Tibial artery (tissue), 4 donors: ENCODE measurements at regions of chr14 and their contacts with region 1.

Region 1: DNA sequence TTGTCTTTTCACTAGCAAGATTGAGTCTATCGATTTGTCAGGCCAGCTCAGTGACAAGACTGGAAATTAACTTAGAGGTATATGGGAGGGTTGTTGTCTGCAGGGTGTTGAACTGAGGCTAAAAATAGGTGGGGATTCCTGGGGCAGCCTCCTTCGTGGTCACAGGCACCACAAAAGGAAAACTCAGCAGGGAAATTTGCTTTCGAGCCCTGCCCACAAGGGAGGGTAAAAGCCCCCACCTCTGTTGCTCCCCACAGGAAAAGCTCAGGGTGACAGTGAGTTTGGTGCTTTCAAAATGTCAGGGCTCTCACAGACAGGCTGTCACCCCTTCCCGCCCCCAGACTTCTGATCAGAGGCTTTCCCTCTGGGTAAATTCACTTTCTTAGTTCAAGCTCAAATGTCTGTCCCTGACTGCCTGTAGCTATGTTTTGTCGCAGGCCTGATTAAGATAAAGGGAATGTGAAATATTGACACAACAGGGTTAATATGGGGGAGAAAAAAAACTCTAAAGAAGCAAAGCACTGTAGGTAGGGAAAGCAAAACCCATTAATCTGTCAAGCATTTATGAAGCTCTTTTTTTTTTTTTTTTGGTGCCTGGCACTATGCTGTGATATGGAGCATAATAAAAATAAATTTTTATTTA is 11.7 kb upstream of the NFKBIA start:
- DNase-seq: no peak
- H3K4me3 ChIP-seq: no peak overlapping the region
- H3K27ac ChIP-seq: peak overlapping the region in 1 of 2 donors; percentile 47
- H3K4me1 ChIP-seq: peaks cover 0 to 28% (median 12%) of the 10 kb centered on the region in 4 donors
- H3K27me3 ChIP-seq: no peaks in the 10 kb centered on the region
- CTCF ChIP-seq: no peak

Region 2: DNA sequence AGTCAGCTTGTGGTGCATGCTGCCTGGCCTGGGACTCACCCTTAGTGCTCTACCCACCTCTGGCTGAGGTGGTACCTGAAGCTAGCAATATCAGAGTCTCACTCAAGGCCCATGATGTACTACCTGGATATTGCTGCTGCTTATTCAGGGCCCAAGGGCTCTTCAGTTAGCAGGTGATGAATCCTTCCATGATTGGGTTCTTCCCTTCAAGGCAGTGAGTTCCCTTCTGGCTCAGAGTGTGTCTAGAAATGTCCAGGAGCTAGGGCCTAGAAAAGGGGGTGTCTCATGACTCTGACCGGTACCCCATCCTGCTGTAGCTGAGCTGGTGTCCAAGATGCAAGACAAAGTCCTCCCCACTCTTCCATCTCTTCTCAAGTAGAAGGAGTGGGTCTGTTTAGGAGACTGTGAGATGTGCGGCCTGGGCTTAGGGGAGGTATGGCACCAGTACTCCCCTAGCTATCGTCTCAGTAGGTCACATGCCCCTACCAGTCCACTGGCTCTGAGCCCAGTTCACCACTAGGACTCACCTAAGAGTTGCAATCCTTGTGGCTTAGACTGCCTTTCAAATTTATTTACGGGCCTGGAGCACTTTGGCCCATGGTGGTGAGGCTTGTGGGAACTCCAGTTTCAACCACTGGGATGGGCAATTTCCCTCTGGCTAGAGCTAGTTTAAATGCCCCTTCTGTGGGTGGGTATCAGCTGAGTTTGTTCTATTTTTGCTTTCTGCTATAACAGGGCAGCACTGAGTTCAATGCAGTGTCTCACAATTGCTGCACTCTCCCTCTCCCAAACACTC is 281.7 kb before region 1 on chr14:
- intact Hi-C with region 1: loop called (anchors 5 kb)
- DNase-seq: no peak
- H3K4me3 ChIP-seq: no peak overlapping the region
- H3K27ac ChIP-seq: no peak overlapping the region
- H3K4me1 ChIP-seq: no peaks in the 10 kb centered on the region
- H3K27me3 ChIP-seq: no peaks in the 10 kb centered on the region
- CTCF ChIP-seq: no peak

Region 3: DNA sequence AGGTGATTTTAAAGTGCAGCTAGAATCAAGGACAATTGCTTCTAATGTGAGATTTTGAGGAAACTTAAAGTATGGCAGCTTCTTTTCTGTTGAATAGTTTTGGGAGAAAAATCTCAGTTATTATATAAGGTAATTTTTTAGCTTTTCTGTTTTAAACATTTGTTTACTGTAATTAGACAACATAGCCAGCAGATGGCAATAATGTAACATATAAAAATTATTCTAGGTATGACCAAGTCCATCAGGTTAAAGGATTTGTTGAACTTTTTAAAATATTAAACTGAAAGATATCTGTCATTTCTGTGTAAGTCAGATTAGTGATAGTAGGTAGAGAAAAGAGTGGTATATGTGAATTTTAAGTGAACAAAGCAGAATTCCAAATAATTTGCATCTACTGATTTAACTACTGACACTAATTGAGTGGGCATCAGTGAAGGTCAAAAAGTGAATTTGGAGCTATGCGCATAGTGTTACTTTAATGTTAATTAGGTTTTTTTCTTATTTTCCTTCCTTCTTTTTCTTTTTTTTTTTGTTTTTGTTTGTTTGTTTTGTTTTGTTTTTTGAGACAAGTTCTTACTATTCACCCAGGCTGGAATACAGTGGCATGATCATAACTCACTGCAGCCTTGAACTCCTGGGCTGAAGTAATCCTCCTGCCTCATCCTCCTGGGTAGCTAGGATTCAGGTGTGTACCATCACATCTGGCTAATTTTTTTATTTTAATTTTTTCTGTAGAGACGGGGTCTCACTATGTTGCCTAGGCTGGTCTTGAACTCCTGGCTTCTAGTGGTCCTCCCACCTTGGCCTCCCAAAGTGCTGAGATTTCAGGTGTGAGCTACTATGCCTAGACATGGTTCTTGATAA is 275.3 kb before region 1 on chr14:
- intact Hi-C with region 1: loop called (anchors 5 kb)
- DNase-seq: no peak
- H3K4me3 ChIP-seq: no peak overlapping the region
- H3K27ac ChIP-seq: no peak overlapping the region
- H3K4me1 ChIP-seq: no peaks in the 10 kb centered on the region
- H3K27me3 ChIP-seq: no peaks in the 10 kb centered on the region
- CTCF ChIP-seq: peak; percentile 43 to 65

Region 4: GRCh38 chr14:35222872-35223466 is 193.3 kb before region 1 on chr14:
- intact Hi-C with region 1: loop called (anchors 5 kb)
- DNase-seq: no peak
- H3K4me3 ChIP-seq: no peak overlapping the region
- H3K27ac ChIP-seq: no peak overlapping the region
- H3K4me1 ChIP-seq: peaks cover 0 to 16% (median 3%) of the 10 kb centered on the region in 4 donors
- H3K27me3 ChIP-seq: no peaks in the 10 kb centered on the region
- CTCF ChIP-seq: no peak